ENCODE measurements at regions of chr20 and their contacts with region 1.

Region 1: GRCh38 chr20:32804022-32804715 is 15.6 kb upstream of the MAPRE1 start:
- DNase-seq: no peak
- ATAC-seq: no peak
- H3K4me3 Mint-ChIP-seq: no peak overlapping the region
- H3K27ac Mint-ChIP-seq: no peak overlapping the region
- H3K4me1 Mint-ChIP-seq: no peaks in the 10 kb centered on the region
- H3K27me3 Mint-ChIP-seq: no peaks in the 10 kb centered on the region

Region 2: GRCh38 chr20:32789896-32790750 is 14.0 kb before region 1 on chr20:
- CTCF ChIA-PET with region 1: interaction called, 10 read pairs
- POLR2A ChIA-PET with region 1: no interaction called
- DNase-seq: peak; percentile 79
- ATAC-seq: peak; percentile 80
- H3K4me3 Mint-ChIP-seq: no peak overlapping the region
- H3K27ac Mint-ChIP-seq: no peak overlapping the region
- H3K4me1 Mint-ChIP-seq: peaks cover 24% of the 10 kb centered on the region
- H3K27me3 Mint-ChIP-seq: no peaks in the 10 kb centered on the region

Region 3: DNA sequence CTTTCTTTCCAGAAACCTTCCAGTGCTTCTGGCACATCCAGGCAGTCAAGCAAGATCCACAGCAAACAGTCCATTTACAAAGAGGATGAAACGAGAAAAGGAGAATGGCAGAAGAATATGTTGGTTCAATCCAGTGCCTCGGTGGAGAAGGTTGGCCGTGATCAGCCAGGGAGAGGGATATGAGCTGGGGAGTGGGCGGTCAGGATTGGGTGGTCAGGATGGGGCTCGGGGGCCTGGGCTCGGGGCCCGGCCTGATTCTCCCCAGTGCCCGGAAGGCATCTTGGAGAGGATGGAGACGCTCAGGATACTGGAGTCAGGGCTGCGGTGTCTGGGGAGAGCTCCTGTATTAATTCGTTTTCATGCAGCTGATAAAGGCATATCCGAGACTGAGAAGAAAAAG is 115.9 kb after region 1 on chr20:
- CTCF ChIA-PET with region 1: no interaction called
- POLR2A ChIA-PET with region 1: no interaction called
- DNase-seq: no peak
- ATAC-seq: no peak
- H3K4me3 Mint-ChIP-seq: no peak overlapping the region
- H3K27ac Mint-ChIP-seq: no peak overlapping the region
- H3K4me1 Mint-ChIP-seq: no peaks in the 10 kb centered on the region
- H3K27me3 Mint-ChIP-seq: no peaks in the 10 kb centered on the region

Measured in activated CD8-positive, alpha-beta T cell treated with anti-CD3 and anti-CD28 coated beads, Interleukin-2, amount 10 ng/mL, durations not matched to agents 7 days and 5 days (primary cell).